ENCODE measurements at regions of chr16 and their contacts with region 1.

Region 1: DNA sequence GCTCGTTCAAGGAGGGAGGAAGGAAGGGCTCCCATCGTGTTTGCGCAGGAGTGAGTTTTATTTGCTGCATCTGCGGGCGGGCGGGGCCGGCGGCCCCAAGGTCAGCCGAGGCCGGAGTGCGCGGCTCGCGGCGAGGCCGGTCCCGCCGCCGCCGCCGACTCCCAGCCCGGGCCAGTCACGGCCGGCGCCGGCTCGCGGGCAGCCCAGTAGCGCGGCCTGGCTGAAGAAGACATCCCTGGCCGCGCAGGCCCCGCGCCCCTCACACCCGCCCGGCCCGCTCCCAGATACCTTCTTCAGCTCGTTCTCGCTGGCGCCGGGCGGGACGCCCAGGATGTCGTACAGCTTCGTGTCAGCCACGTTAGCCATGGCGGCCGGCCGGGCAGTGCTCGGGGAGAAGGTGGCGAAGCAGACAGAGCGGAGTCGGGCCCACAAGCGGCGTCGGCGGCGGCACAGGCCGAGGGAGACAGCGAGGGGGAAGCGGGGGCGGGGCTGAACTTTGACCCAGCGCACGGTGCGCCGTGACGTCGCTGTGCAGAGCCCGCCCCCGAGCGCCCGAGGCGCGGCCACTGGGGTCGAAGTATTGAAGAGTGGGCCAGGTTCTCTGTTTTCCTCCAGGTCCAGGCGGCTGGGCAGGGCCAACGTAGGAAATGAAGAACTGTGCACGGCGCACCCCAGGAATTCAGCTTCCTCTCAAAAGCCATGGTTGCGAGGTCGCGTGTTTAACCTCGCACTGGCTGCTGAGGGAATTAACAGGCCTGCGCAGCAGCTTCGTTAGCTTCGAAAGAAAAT is at the start of gene DNAJA2:
- DNase-seq: peak; percentile 93 to 97 (median 94)
- ATAC-seq: peak; percentile 97 to 99 (median 99)
- H3K4me3 ChIP-seq: peak within 1 kb of the TSS; percentile 72 to 98 (median 84)
- H3K27ac ChIP-seq: peak within 1 kb of the TSS; percentile 90 to 99 (median 96)
- H3K4me1 ChIP-seq: peaks cover 0 to 53% (median 39%) of the 10 kb centered on the region in 12 donors
- H3K27me3 ChIP-seq: no peaks in the 10 kb centered on the region
- CTCF ChIP-seq: peak in 2 of 12 donors; percentile 23 to 29
- POLR2A ChIP-seq: peak in 1 of 2 donors; percentile 91
- total RNA-seq, gene DNAJA2: 58.5 to 92.6 (median 81.4) TPM

Region 2: DNA sequence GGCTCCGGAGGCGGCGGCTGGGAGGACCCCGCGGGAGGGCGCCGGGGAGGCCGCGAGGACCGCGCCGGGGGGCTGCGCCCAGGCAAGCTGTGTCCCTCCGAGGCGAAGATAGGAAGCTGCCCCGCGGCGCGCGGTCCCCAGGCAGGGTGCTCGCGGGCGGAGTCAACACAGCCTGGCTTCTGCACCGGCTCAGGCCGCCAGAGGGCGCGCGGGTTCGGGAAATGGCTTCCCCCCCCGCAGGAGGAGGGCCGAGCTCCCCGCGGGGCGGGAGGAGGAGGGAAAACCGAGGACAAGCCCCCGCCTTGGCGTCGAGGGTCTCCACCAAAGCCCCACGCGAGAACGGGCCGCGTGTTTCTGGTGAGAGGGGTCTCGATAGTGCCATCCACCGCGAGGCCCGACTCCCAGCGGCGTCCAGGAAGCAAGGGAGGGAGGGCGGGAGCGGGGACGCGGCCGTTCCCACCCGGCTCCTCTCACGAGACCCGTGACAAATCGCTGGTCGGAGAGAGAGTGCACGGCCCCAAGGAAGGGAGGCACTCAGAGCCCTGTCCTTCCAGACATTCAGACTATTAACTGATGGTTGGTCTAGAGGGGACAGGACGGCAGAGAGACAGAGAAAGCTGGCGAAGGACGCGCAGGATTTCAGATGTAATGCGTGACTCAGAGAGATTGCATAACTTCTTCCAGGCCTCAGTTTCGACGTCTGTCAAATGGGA is 64.5 kb after region 1 on chr16:
- intact Hi-C with region 1: loop called in 1 of 10 experiments (anchors 5 kb)
- DNase-seq: peak; percentile 89 to 95 (median 90)
- ATAC-seq: peak; percentile 85 to 99 (median 98)
- H3K4me3 ChIP-seq: peak overlapping the region; percentile 60 to 78 (median 66)
- H3K27ac ChIP-seq: peak overlapping the region in 6 of 12 donors; percentile 29 to 68 (median 50)
- H3K4me1 ChIP-seq: peaks cover 0 to 12% (median 3%) of the 10 kb centered on the region in 12 donors
- H3K27me3 ChIP-seq: no peaks in the 10 kb centered on the region
- CTCF ChIP-seq: peak; percentile 87 to 98 (median 94)
- POLR2A ChIP-seq: no peak

Measured in heart left ventricle (tissue), 16 donors.